ENCODE measurements at regions of chr6 and their contacts with region 1.

Region 1: DNA sequence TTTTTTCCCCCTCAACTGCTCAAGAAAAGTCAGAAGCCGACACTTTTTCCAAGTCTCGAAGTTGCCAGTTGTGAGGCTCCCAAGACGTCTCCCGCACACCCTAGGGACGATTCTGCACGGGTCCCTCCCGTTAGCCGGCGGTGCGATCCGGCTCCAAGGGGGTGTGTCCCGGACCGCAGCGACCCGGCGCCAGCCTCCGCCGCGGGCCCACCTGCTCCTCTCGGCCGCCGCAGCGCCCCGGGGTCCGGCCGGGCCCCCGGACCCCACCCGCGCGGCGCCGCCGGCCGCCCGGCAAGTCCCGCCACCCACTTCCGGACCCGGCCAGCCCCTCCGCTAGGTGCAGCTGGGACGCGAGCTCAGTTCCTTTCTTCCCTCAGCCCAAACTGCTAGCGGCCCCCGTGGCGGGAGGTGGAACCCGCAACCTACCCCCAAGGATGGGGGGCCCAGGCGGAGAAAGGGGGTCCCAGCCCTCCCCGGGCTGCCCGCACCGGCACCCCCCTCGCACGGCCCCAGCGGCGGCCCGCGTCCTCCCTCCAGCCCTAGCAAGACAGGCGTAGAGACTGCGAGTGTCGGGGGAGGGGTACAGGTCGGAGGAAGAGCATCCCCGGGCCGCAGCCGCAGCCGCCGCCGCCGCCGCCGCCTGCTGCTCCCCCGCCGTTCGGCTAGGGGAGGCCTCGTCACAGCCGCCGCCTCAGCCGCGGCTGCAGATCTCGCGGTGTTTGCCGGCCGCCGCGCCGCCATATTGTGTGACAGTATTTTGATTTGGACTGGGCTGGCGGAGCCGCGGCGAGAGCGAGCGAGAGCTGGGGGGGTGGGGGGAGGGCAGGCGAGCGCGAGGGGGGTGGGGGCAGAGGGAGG is 485 bp upstream of the TAB2 start:
- DNase-seq: peak; percentile 83 to 91 (median 88)
- ATAC-seq: peak; percentile 86
- H3K4me3 ChIP-seq: peak overlapping the region; percentile 73
- H3K4me3 Mint-ChIP-seq: peak overlapping the region; percentile 74 to 99 (median 86)
- H3K27ac ChIP-seq: peak overlapping the region; percentile 95
- H3K27ac Mint-ChIP-seq: peak overlapping the region; percentile 81 to 92 (median 86)
- H3K4me1 ChIP-seq: peaks cover 13 to 26% of the 10 kb centered on the region in 2 donors
- H3K4me1 Mint-ChIP-seq: peaks cover 23 to 56% (median 42%) of the 10 kb centered on the region in 7 donors
- H3K27me3 ChIP-seq: no peaks in the 10 kb centered on the region
- H3K27me3 Mint-ChIP-seq: no peaks in the 10 kb centered on the region

Region 2: GRCh38 chr6:149094156-149094555 is 222.9 kb before region 1 on chr6:
- CTCF ChIA-PET with region 1: no interaction called
- POLR2A ChIA-PET with region 1: interaction called, 3 read pairs
- intact Hi-C with region 1: loop called in 1 of 2 experiments (anchors 2 kb)
- DNase-seq: no peak
- ATAC-seq: no peak
- H3K4me3 ChIP-seq: no peak overlapping the region
- H3K4me3 Mint-ChIP-seq: peak overlapping the region; percentile 13 to 85 (median 66)
- H3K27ac ChIP-seq: peak overlapping the region; percentile 32
- H3K27ac Mint-ChIP-seq: peak overlapping the region; percentile 13 to 98 (median 82)
- H3K4me1 ChIP-seq: peaks cover 26 to 36% of the 10 kb centered on the region in 2 donors
- H3K4me1 Mint-ChIP-seq: peaks cover 25 to 75% (median 52%) of the 10 kb centered on the region in 7 donors
- H3K27me3 ChIP-seq: no peaks in the 10 kb centered on the region
- H3K27me3 Mint-ChIP-seq: no peaks in the 10 kb centered on the region

Region 3: GRCh38 chr6:149235130-149235561 is 81.9 kb before region 1 on chr6:
- CTCF ChIA-PET with region 1: no interaction called
- POLR2A ChIA-PET with region 1: interaction called, 3 read pairs
- intact Hi-C with region 1: loop called (anchors 1 kb)
- DNase-seq: no peak
- ATAC-seq: no peak
- H3K4me3 ChIP-seq: no peak overlapping the region
- H3K4me3 Mint-ChIP-seq: peak overlapping the region in 8 of 10 donors; percentile 38 to 85 (median 76)
- H3K27ac ChIP-seq: peak overlapping the region; percentile 9
- H3K27ac Mint-ChIP-seq: peak overlapping the region; percentile 5 to 99 (median 95)
- H3K4me1 ChIP-seq: peaks cover 30 to 40% of the 10 kb centered on the region in 2 donors
- H3K4me1 Mint-ChIP-seq: peaks cover 35 to 67% (median 51%) of the 10 kb centered on the region in 7 donors
- H3K27me3 ChIP-seq: no peaks in the 10 kb centered on the region
- H3K27me3 Mint-ChIP-seq: no peaks in the 10 kb centered on the region

Region 4: DNA sequence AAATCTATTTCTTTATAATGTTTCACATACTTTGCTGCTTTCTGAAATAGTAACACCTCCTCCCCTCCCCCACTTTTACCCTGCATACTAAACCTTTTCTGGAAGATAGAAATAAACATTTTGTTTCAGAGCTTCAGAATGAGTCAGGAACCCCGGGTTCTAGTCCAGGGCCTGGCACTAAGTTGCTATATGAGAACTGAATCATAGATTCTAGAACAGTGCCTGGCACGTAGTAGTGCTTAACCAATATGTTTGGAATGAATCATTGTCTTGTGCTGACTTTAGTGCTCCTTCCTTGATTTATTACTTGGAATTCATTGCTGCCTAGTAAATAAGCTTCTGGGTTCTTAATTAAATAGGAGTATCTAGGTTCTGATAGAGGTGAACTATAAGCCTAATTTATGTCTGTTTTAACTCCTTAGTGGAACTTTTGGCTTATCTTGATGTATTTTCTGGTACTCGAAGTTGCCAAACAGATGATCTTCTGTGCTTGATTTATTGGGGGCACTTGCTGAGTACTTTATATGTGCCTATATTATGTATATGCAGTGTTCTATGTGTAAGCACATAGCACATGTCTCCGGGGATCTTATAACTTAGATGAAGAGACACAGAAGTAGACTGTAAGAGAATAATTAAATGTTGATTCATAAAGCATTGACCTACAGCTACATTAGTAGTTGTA is 19.0 kb after region 1 on chr6:
- CTCF ChIA-PET with region 1: interaction called, 5 read pairs
- POLR2A ChIA-PET with region 1: interaction called, 7 read pairs
- intact Hi-C with region 1: loop called (anchors 2 kb)
- DNase-seq: no peak
- ATAC-seq: peak; percentile 61
- H3K4me3 ChIP-seq: no peak overlapping the region
- H3K4me3 Mint-ChIP-seq: peak overlapping the region in 9 of 10 donors; percentile 0 to 73 (median 50)
- H3K27ac ChIP-seq: no peak overlapping the region
- H3K27ac Mint-ChIP-seq: peak overlapping the region in 8 of 9 donors; percentile 6 to 82 (median 23)
- H3K4me1 ChIP-seq: peaks cover 40 to 44% of the 10 kb centered on the region in 2 donors
- H3K4me1 Mint-ChIP-seq: peaks cover 67 to 100% (median 88%) of the 10 kb centered on the region in 7 donors
- H3K27me3 ChIP-seq: no peaks in the 10 kb centered on the region
- H3K27me3 Mint-ChIP-seq: no peaks in the 10 kb centered on the region

Region 5: GRCh38 chr6:149513915-149514314 is 196.9 kb after region 1 on chr6:
- CTCF ChIA-PET with region 1: no interaction called
- POLR2A ChIA-PET with region 1: no interaction called
- intact Hi-C with region 1: loop called in 1 of 2 experiments (anchors 1 kb)
- DNase-seq: no peak
- ATAC-seq: peak; percentile 31
- H3K4me3 ChIP-seq: no peak overlapping the region
- H3K4me3 Mint-ChIP-seq: no peak overlapping the region
- H3K27ac ChIP-seq: no peak overlapping the region
- H3K27ac Mint-ChIP-seq: peak overlapping the region in 7 of 9 donors; percentile 42 to 72 (median 56)
- H3K4me1 ChIP-seq: peaks cover 13 to 16% of the 10 kb centered on the region in 2 donors
- H3K4me1 Mint-ChIP-seq: peaks cover 8 to 44% (median 43%) of the 10 kb centered on the region in 7 donors
- H3K27me3 ChIP-seq: no peaks in the 10 kb centered on the region
- H3K27me3 Mint-ChIP-seq: no peaks in the 10 kb centered on the region